Posterior cingulate gyrus (tissue), 11 donors: ENCODE measurements at regions of chr10 and their contacts with region 1.

Region 1: DNA sequence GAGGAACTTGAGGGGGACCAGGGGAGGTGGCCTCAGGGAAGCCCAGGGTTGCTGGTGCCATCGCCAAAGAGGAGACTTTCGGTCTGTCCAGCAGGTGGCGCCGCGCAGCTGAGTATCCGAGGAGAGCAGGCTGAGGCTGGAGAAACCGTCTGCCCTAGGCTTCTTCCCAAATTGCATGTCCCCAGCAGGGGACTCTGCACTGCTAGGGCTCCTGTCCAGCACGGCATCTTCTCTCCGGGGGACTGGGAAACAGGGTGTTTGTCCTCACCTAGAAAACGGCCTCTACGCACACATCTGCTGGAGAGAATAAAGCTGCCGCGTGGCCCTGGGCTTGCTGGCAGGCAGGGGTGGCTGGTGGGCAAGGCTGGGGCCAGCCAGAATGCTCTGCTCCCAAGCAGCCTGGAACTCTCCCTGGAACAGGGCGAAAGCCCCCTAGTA is 161.9 kb downstream of the SH2D4B start:
- DNase-seq: peak; percentile 74 to 97 (median 92)

Region 2: GRCh38 chr10:80861882-80862281 is 162.3 kb after region 1 on chr10:
- intact Hi-C with region 1: loop called (anchors 5 kb)
- DNase-seq: no peak

Region 3: GRCh38 chr10:80894797-80895467 is 195.3 kb after region 1 on chr10:
- intact Hi-C with region 1: no loop called
- DNase-seq: no peak

Region 4: DNA sequence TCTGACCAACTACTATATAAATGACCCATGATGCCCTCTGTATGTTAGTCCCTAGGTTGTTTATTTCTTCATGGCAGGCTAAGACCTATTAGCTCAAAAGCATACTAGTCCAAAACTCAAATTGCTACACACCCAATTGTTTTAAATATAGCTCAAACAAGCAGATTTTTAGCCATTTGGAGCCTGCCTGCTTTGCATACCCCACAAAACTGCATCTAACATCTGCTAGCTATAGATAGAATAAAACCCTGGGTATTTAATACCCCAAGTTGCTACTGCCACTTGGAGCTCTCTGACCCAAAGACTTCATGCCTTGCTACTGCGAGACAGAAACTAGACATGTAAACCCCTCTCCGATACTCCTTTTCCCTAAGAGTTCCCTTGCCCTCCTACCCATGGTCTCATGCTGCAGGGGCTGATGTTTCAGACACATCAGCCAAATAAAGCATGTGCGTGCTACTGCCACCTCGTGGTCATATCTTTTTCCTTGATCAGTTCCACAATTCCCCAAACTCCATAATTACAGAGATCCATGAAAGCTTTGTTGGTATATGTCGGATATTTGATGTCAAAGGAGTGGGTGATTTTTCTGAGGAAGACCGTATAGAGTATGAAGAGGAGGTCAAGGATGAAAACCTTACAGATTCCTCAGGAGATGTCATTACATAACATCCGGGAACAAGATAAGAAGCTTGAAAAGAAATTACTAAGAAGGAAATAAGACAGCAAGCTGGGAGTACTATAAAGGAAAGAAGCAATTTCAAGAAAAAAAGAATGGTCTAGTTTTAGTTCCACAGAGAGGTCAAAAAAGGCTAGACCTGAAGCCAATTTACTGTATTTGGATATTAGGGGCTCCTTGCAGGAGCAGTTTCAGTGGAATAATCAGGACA is 224.7 kb after region 1 on chr10:
- intact Hi-C with region 1: loop called (anchors 2 kb)
- DNase-seq: peak in 6 of 10 donors; percentile 8 to 65 (median 49)

Region 5: GRCh38 chr10:80952436-80952835 is 252.8 kb after region 1 on chr10:
- intact Hi-C with region 1: no loop called
- DNase-seq: no peak

Region 6: GRCh38 chr10:81018708-81019365 is 319.2 kb after region 1 on chr10:
- intact Hi-C with region 1: loop called (anchors 5 kb)
- DNase-seq: peak in 1 of 10 donors; percentile 14